ENCODE measurements at regions of chr10 and their contacts with region 1.

Region 1: DNA sequence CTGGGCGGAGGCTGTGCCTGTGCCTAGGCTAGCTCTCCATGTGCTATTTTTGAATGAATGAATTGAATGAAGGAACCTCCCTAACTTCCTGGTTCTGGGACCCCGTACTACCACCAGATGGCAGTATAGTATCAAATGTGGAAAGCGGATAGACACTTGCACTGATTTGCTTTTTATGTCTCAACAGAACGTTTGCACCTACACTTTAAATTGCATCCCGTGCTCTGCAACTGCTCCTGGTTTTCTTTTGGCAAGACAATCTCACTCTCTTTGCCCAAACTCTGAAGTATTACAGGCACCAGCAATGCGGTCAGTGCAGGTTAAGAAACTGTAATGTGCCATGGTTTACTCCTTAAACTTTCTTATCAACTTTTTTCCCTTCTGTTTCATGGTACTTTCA is 6.5 kb downstream of the FZD8 start:
- DNase-seq: no peak
- ATAC-seq: peak; percentile 66
- H3K4me3 Mint-ChIP-seq: no peak overlapping the region
- H3K27ac Mint-ChIP-seq: no peak overlapping the region
- H3K4me1 Mint-ChIP-seq: peaks cover 9% of the 10 kb centered on the region
- H3K27me3 Mint-ChIP-seq: peaks cover 36% of the 10 kb centered on the region
- CTCF ChIP-seq: no peak

Region 2: GRCh38 chr10:35451151-35452016 is 184.2 kb before region 1 on chr10:
- CTCF ChIA-PET with region 1: no interaction called
- POLR2A ChIA-PET with region 1: no interaction called
- intact Hi-C with region 1: no loop called
- DNase-seq: no peak
- ATAC-seq: peak; percentile 94
- H3K4me3 Mint-ChIP-seq: peak overlapping the region; percentile 1
- H3K27ac Mint-ChIP-seq: peak overlapping the region; percentile 73
- H3K4me1 Mint-ChIP-seq: peaks cover 80% of the 10 kb centered on the region
- H3K27me3 Mint-ChIP-seq: no peaks in the 10 kb centered on the region
- CTCF ChIP-seq: no peak

Region 3: DNA sequence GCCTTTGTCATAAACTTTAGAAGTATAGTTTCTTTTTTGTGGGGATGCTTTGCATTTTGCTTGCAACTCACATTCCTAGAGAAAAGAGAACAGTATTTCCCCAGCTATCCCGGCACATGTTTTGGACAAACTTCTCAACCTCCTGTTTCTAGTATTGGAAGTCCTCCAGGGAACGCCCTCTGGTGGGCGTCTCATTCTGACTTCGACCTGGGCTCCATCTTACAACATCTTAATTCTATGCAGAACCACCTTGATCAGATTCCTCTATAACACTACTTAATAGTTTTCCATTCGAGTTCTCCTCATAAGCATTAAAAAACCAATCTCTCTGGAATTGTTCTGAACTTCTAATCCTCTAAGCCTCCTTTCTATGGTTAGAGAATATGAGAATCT is 146.1 kb after region 1 on chr10:
- CTCF ChIA-PET with region 1: interaction called, 3 read pairs
- POLR2A ChIA-PET with region 1: no interaction called
- intact Hi-C with region 1: loop called (anchors 1 kb)
- DNase-seq: no peak
- ATAC-seq: no peak
- H3K4me3 Mint-ChIP-seq: no peak overlapping the region
- H3K27ac Mint-ChIP-seq: no peak overlapping the region
- H3K4me1 Mint-ChIP-seq: no peaks in the 10 kb centered on the region
- H3K27me3 Mint-ChIP-seq: peaks cover 3% of the 10 kb centered on the region
- CTCF ChIP-seq: no peak

Region 4: DNA sequence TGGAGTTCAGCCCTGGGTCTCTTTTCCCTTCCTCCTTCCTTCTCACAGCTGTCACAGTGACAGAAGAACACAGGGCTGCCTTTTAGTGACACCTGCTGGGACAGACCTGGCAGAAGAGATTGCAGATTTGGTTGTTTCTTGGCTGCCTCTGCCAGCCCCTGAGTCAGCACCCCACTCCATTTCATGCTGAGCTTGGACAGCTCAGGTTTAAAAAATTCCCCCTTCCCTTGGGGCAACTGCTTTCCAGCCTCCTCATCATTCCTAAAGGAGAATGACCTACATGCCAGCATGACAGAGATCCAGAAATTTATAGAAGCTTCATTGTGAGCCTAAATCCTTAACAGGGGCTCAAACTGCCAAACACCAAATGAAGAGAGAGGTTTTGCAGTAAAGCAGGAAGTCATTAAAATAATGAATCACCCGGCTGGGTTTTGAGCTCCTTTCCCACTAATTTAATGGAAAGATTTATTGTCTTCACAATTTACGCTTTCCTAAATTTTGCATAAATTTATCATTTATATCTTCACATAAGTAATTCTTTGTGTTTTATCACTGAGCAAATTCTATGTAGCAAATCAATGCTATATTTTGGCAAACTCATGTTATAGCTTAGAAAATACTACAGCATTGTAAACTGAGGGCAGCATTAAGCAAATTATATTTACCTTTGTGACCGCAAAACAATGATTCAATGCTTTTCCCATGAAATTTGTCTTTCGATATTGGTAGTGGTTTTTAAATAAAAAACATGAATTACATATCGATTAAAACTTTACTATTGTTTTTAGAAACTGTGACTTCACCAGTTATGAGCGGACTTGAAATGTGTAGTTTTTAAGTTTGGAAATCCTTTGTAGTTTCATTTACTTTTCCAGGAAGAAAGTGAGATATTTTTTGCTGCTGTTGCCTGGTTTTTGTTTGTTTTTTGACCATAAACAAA is 1090.3 kb after region 1 on chr10:
- CTCF ChIA-PET with region 1: interaction called, 8 read pairs
- POLR2A ChIA-PET with region 1: no interaction called
- intact Hi-C with region 1: loop called (anchors 1 kb)
- DNase-seq: no peak
- ATAC-seq: peak; percentile 37
- H3K4me3 Mint-ChIP-seq: no peak overlapping the region
- H3K27ac Mint-ChIP-seq: no peak overlapping the region
- H3K4me1 Mint-ChIP-seq: no peaks in the 10 kb centered on the region
- H3K27me3 Mint-ChIP-seq: no peaks in the 10 kb centered on the region
- CTCF ChIP-seq: no peak

Region 5: DNA sequence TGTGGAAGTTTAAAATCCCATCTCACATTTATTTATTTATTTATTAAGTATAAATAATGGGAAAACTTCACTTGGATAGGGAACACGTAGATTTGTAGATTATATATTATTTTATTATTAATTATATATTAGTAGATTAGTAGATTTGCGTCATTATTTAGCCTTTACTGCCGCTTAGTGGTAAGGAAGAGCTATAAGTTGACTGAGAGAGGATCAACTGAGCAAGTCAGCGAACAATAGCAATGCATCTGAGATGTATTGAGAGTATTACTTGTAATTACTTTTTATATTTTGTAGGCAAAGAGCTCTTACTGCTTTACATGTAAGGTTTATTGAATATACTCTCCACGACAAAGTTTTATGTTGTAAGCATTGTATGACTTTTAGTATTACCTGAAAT is 1245.3 kb after region 1 on chr10:
- CTCF ChIA-PET with region 1: interaction called, 35 read pairs
- POLR2A ChIA-PET with region 1: no interaction called
- intact Hi-C with region 1: loop called (anchors 1 kb)
- DNase-seq: no peak
- ATAC-seq: no peak
- H3K4me3 Mint-ChIP-seq: no peak overlapping the region
- H3K27ac Mint-ChIP-seq: no peak overlapping the region
- H3K4me1 Mint-ChIP-seq: no peaks in the 10 kb centered on the region
- H3K27me3 Mint-ChIP-seq: peaks cover 2% of the 10 kb centered on the region
- CTCF ChIP-seq: no peak

Measured in activated B cell treated with CpG ODN at 0.5 μM for 24 hours (primary cell).